Adrenal gland (tissue), 19 donors: ENCODE measurements at regions of chr3 and their contacts with region 1.

Region 1: DNA sequence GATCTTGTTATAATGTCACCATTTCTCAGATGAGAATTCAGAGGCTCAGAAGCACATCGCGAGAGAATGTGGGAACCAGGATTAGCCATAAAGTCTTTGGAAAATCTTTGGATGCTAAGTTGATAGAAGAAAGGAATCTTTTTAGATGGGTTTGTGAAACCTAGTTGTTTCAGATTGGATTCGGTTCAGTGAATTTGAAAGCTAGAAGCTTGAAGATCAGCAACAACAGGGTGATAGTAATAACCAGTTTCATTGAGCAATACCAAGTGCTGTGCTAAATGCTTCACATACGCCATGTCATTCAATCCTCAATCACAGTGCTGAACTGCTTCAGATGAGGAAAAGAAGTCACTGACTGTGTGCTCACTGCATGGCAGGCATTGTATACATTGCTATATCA is 47.4 kb upstream of the MITF start:
- DNase-seq: no peak
- H3K4me3 ChIP-seq: no peak overlapping the region
- H3K27ac ChIP-seq: no peak overlapping the region
- H3K4me1 ChIP-seq: no peaks in the 10 kb centered on the region
- H3K27me3 ChIP-seq: no peaks in the 10 kb centered on the region
- CTCF ChIP-seq: no peak
- POLR2A ChIP-seq: no peak

Region 2: DNA sequence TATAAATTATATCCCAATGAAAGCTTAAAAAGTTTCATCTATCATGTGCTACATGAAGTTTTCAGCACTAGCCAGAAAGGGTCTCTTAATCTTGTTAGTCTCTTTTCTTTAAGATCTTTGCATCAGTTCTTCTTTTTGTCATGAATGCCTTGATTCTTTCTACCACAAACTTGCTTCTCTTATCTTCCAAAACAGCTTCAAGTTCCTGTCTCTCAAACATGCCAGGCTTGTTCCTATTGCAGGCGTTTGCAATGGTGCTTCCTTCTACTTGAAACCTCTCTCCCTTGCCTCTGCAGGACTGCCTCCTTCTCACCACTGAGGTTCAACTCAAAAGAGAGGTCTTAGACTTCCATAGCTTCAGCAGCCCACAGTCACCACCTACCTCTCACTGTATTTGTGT is 201.6 kb before region 1 on chr3:
- intact Hi-C with region 1: no loop called
- DNase-seq: no peak
- H3K4me3 ChIP-seq: no peak overlapping the region
- H3K27ac ChIP-seq: no peak overlapping the region
- H3K4me1 ChIP-seq: no peaks in the 10 kb centered on the region
- H3K27me3 ChIP-seq: no peaks in the 10 kb centered on the region
- CTCF ChIP-seq: no peak
- POLR2A ChIP-seq: no peak

Region 3: DNA sequence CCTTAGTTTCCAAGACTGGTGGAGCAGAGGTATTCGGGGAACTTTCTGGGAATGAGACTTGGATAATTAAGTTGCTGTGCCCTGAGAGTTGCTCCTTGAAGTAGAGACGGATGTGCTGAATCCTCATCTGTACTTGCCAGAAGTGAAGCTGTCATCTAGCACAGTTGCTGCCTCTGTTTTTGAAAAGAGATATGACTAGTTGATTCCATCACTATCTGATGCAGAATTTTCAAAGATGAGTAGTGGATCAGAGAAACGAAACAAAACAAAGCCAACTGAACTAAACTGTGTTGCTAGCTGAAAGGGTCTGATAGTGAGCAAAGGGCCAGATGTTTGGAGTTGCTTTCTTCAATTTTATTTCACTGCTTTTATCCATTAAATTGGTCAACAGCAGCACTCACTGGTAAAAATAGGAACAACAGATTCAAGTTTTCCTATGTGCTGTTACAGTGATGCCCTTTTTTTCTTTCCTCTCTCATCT is 100.1 kb after region 1 on chr3:
- intact Hi-C with region 1: loop called (anchors 5 kb)
- DNase-seq: no peak
- H3K4me3 ChIP-seq: no peak overlapping the region
- H3K27ac ChIP-seq: peak overlapping the region in 2 of 5 donors; percentile 10 to 35
- H3K4me1 ChIP-seq: peaks cover 14 to 31% of the 10 kb centered on the region in 2 donors
- H3K27me3 ChIP-seq: no peaks in the 10 kb centered on the region
- CTCF ChIP-seq: peak; percentile 29 to 83 (median 68)
- POLR2A ChIP-seq: no peak

Region 4: DNA sequence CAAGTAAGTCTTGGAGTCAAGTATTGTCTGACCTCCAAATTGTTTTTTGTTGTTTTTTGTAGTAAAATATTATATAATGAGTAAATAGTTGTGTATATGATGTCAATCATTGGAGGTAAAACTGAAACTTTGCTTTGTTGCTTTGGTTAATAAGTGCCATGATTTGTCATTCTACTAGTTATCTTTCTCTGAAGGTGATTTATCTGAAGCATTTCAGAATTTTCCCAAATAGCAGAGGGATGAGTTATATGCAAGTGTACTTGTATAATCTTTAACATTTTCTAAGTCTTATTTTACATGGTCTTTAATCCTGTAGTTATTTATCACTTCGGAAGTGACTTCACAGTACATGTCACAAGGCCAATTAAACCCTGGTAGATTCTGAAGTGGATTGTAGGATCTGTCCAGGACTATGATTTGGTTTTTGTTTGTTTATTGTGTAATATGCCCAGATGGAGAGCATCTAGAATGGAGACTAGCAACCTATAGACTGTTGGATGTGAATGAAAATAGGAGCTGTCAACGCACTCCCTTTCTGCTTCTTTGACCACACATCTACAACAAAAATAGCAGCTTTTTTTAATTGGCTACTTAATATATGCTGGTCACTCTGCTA is 214.6 kb after region 1 on chr3:
- intact Hi-C with region 1: no loop called
- DNase-seq: no peak
- H3K4me3 ChIP-seq: no peak overlapping the region
- H3K27ac ChIP-seq: no peak overlapping the region
- H3K4me1 ChIP-seq: peaks cover 0 to 6% of the 10 kb centered on the region in 2 donors
- H3K27me3 ChIP-seq: no peaks in the 10 kb centered on the region
- CTCF ChIP-seq: no peak
- POLR2A ChIP-seq: no peak

Region 5: DNA sequence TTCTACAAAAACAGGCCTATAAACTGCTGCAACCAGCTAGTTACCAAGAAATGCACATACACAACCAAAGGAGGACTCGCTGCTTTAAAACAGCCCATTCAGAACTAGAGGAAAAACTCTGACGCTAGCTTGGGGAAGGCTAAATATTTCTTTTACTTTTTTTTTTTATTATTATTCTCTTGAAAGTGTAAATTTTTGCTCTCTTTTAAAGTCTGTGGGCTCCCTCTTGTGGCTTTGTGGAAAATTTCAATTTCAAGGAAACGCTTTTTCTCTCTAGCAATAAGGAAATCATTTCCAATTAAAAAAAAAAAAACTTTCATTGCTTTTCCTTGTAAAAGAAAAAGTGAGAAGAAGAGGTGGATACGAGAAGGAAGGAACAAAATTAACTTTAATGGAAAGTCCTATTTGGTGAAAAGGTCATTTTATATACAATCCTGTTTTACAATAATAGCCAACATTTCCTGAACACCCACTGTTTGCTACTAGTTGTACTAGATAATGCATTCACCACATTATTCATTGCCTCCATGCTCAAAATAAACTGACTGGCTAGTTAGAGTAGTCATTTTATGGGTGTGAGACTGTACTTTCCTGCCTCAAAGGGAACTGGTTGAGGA is 256.5 kb after region 1 on chr3:
- intact Hi-C with region 1: loop called (anchors 5 kb)
- DNase-seq: no peak
- H3K4me3 ChIP-seq: no peak overlapping the region
- H3K27ac ChIP-seq: no peak overlapping the region
- H3K4me1 ChIP-seq: no peaks in the 10 kb centered on the region
- H3K27me3 ChIP-seq: no peaks in the 10 kb centered on the region
- CTCF ChIP-seq: peak; percentile 28 to 75 (median 58)
- POLR2A ChIP-seq: no peak